Heart left ventricle (tissue), 16 donors: ENCODE measurements at regions of chr6 and their contacts with region 1.

Region 1: DNA sequence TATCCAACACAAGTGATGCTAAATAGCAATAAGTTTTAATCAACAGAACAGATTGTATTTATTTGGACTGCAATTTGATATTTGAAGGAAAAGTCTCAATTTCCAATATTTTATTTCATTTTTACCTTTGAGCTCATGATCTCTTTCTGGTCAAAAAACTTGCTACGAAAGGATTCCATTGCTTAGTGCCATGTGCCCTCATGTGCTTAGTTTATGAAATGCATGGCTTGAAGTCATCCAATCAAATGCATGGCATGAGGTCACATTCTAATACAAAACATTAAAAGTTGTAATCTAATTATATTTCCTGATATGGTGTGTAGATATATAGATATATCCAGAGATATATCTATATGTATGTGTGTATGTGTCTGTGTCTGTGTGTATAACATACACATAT is 321.2 kb upstream of the ADGRB3 start:
- DNase-seq: no peak
- ATAC-seq: no peak
- H3K4me3 ChIP-seq: no peak overlapping the region
- H3K27ac ChIP-seq: no peak overlapping the region
- H3K4me1 ChIP-seq: no peaks in the 10 kb centered on the region
- H3K27me3 ChIP-seq: no peaks in the 10 kb centered on the region
- CTCF ChIP-seq: peak in 2 of 12 donors; percentile 9 to 16
- POLR2A ChIP-seq: no peak

Region 2: DNA sequence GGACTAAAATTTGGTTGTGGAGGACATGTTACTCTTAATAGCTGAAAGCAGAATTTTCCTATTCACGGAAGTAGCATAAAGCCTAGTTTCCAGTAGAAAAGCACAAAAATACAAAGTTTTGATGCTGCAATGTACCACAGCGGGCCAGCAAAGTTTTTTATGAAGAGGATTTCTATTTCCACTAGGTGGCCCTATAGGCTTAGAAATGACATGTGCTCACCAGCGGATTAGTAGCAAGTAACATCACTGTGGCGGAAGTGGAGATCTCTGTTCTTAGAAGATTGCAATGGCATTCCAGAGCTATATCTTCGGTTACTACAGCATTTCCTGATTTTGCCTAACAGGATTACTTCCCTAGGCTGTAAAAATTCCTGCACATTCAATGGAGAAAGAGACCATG is 1387.8 kb before region 1 on chr6:
- intact Hi-C with region 1: loop called in 1 of 10 experiments (anchors 5 kb)
- DNase-seq: no peak
- ATAC-seq: no peak
- H3K4me3 ChIP-seq: no peak overlapping the region
- H3K27ac ChIP-seq: no peak overlapping the region
- H3K4me1 ChIP-seq: no peaks in the 10 kb centered on the region
- H3K27me3 ChIP-seq: no peaks in the 10 kb centered on the region
- CTCF ChIP-seq: peak in 2 of 12 donors; percentile 8 to 11
- POLR2A ChIP-seq: no peak